MCF 10A (cell line): ENCODE measurements at regions of chr17 and their contacts with region 1.

Region 1: DNA sequence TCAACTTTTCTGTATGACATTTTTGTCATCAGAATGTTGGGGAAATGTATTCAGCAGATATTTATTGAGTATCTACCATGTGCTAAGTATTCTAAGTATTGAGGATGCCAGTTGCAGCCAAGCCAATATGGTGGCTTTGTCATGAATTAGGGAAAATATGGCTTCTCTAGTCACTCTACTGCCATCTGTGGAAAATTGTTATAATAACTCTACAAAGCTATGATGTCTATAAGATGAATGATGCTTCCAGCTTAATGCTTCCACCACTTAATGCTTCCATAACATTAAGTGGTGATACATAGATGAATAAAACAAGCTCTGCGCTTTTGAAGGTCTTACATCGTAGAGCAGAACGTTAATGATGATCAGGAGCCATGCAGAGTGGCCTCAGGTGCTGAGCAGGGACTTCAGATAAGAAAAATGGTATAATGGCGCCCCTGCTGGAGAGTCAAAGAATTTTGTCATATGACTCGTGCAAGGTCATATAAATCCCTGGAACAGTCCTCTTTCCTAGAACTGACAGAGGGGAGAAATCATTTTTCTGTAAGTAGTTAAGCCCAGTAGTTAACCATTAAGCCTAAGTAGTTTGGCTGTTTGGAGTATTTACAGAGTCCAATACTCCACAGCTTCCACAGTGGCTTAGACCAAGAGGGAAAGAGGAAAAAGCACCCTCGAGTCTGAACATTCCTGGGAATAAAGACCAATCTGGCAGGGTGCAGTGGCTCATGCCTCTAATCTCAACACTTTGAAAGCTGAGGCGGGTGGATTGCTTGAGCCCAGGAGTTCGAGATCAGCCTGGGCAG is 2.7 kb upstream of the TMIGD1 start:
- DNase-seq: peak; percentile 78
- H3K4me3 Mint-ChIP-seq: no peak overlapping the region
- H3K27ac Mint-ChIP-seq: no peak overlapping the region
- H3K4me1 Mint-ChIP-seq: peaks cover 20% of the 10 kb centered on the region
- H3K27me3 Mint-ChIP-seq: no peaks in the 10 kb centered on the region
- CTCF ChIP-seq: peak; percentile 67

Region 2: GRCh38 chr17:30116661-30117551 is 219.7 kb before region 1 on chr17 and contains the start of gene NSRP1:
- CTCF ChIA-PET with region 1: interaction called, 4 read pairs
- POLR2A ChIA-PET with region 1: interaction called, 10 read pairs
- intact Hi-C with region 1: no loop called
- DNase-seq: peak; percentile 95
- H3K4me3 Mint-ChIP-seq: peak within 1 kb of the TSS; percentile 97
- H3K27ac Mint-ChIP-seq: peak within 1 kb of the TSS; percentile 100
- H3K4me1 Mint-ChIP-seq: peaks cover 15% of the 10 kb centered on the region
- H3K27me3 Mint-ChIP-seq: no peaks in the 10 kb centered on the region
- CTCF ChIP-seq: no peak
- total RNA-seq, gene NSRP1: 40.8 and 57.3 TPM in 2 replicates

Region 3: GRCh38 chr17:30124273-30124796 is 212.2 kb before region 1 on chr17:
- CTCF ChIA-PET with region 1: interaction called, 12 read pairs
- POLR2A ChIA-PET with region 1: interaction called, 4 read pairs
- intact Hi-C with region 1: loop called (anchors 1 kb)
- DNase-seq: no peak
- H3K4me3 Mint-ChIP-seq: no peak overlapping the region
- H3K27ac Mint-ChIP-seq: peak overlapping the region; percentile 61
- H3K4me1 Mint-ChIP-seq: peaks cover 29% of the 10 kb centered on the region
- H3K27me3 Mint-ChIP-seq: no peaks in the 10 kb centered on the region
- CTCF ChIP-seq: no peak

Region 4: GRCh38 chr17:30176855-30177254 is 159.7 kb before region 1 on chr17:
- CTCF ChIA-PET with region 1: no interaction called
- POLR2A ChIA-PET with region 1: no interaction called
- intact Hi-C with region 1: no loop called
- DNase-seq: no peak
- H3K4me3 Mint-ChIP-seq: no peak overlapping the region
- H3K27ac Mint-ChIP-seq: peak overlapping the region; percentile 20
- H3K4me1 Mint-ChIP-seq: peaks cover 3% of the 10 kb centered on the region
- H3K27me3 Mint-ChIP-seq: no peaks in the 10 kb centered on the region
- CTCF ChIP-seq: no peak

Region 5: DNA sequence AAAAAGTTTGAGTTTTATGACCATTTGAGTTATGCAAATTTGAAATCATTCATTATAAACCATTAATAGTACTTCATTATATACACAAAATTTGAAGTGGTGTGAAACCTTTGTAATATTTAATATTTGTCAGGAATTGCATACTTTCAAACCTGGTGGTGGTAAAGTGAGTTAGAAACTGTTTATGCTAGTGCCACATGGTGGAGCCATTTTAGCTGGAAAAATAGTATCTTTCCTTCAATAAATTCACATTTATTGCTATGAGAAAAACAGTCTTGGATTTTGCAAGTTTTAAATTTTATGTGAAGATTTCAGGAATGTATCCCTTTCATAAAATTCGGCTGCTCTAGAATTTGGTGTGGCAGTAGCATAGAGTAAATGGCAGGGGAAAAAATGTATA is 37.6 kb before region 1 on chr17:
- CTCF ChIA-PET with region 1: interaction called, 7 read pairs
- POLR2A ChIA-PET with region 1: no interaction called
- intact Hi-C with region 1: loop called (anchors 1 kb)
- DNase-seq: no peak
- H3K4me3 Mint-ChIP-seq: no peak overlapping the region
- H3K27ac Mint-ChIP-seq: no peak overlapping the region
- H3K4me1 Mint-ChIP-seq: no peaks in the 10 kb centered on the region
- H3K27me3 Mint-ChIP-seq: peaks cover 8% of the 10 kb centered on the region
- CTCF ChIP-seq: no peak

Region 6: DNA sequence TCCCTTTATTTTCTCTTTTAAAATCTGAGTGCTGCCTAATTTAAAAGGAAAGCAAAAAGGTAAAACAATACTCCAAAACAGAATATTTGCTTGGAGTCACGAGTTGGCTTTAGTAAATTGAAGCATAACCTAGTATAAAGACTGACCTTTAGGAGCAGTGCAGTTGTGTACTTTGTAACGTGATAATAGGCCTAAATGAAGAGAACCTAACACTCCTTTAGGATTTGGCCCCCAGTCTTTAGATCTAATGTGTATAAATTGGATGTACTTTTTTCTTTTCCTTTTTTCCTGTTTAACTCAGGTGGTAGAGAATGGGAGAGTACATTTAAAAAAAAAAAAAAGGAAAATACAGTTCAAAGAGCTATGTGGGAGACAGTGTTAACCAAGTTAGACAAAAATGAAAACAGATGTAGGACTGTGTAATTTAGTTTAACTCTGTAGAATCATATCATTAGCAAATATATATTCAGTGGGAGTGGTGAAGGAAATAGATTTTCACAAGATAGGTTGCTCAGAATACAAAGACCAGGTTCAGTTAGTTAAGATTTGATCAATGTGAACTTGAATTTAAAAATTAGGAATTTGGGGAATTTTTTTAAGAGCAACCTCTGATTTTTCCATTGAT is 58.9 kb after region 1 on chr17:
- CTCF ChIA-PET with region 1: interaction called, 11 read pairs
- POLR2A ChIA-PET with region 1: no interaction called
- intact Hi-C with region 1: no loop called
- DNase-seq: no peak
- H3K4me3 Mint-ChIP-seq: no peak overlapping the region
- H3K27ac Mint-ChIP-seq: no peak overlapping the region
- H3K4me1 Mint-ChIP-seq: peaks cover 6% of the 10 kb centered on the region
- H3K27me3 Mint-ChIP-seq: no peaks in the 10 kb centered on the region
- CTCF ChIP-seq: no peak